ENCODE measurements at regions of chr5 and their contacts with region 1.

Region 1: DNA sequence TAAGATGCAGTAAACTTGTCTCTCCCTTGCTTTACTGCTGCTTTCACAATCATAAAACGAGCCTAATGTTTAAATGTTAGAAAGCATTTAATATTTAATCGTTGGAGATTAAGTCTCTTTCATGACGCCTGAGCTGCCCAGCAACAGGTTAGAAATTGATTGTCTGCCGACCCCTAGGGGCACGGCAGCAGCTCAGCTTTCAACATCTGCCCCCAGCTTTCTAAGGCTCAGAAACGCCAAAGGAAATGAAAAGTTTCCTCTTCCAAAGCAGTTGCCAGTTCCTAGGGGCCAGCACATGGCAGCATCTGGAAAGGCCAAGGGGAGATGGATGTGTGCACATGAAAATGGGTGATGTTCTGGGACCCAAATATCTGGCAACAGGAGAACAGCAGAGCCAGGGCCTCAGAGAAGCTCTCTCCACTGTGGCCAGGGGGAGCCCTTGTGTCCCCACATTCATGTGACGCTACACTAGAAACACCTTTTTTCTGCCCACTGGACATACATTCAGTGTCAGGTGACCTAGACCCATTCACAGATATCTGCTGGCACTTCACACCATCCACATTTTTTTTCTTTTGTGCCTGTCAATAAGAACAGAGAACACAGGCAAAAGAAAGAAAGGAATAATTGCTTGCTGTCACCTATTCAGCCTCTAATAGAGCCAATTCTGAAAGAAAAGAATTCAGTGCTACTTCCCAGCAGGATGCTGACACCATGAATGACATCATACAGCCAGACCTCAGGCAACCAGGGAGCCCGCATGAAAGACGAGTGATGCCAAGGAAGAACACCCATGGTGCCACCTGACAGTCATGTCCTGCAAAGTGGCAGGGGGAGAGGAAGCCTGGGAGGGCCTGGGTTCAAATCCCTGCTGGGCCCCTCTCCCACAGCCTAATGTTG is 205.0 kb upstream of the TAS2R1 start:
- DNase-seq: no peak
- H3K4me3 ChIP-seq: no peak overlapping the region
- H3K4me3 Mint-ChIP-seq: no peak overlapping the region
- H3K27ac Mint-ChIP-seq: no peak overlapping the region
- H3K4me1 ChIP-seq: peaks cover 40% of the 10 kb centered on the region
- H3K4me1 Mint-ChIP-seq: peaks cover 32% of the 10 kb centered on the region
- H3K27me3 ChIP-seq: no peaks in the 10 kb centered on the region
- H3K27me3 Mint-ChIP-seq: no peaks in the 10 kb centered on the region
- CTCF ChIP-seq: no peak

Region 2: DNA sequence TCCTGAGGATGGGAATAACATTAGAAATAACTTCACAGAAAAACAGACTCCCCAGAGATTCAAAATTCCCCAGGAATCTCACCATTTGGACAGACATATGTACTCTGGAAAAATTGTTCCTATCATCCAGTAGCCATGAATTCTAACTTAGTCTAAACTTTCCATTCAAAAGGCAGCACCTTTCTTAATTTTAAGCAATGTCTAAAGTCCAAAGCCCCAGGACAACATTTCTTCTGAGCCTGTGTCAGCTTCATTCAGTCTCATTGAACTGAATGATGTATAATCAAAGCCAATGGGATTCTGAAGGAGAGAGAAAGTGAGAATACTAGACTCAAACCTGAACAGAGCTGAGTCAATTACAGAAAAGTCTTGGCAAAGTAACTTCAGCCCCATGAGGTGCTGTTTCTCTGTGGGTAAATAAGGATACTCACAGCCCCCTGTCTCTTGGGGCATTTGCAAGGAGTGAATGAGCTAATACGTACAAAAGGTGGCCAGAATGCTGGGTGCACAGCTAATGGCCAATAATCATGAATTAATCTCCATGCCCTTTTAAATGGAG is 429.8 kb before region 1 on chr5:
- CTCF ChIA-PET with region 1: no interaction called
- POLR2A ChIA-PET with region 1: no interaction called
- intact Hi-C with region 1: no loop called
- DNase-seq: no peak
- H3K4me3 ChIP-seq: no peak overlapping the region
- H3K4me3 Mint-ChIP-seq: no peak overlapping the region
- H3K27ac Mint-ChIP-seq: no peak overlapping the region
- H3K4me1 ChIP-seq: peaks cover 9% of the 10 kb centered on the region
- H3K4me1 Mint-ChIP-seq: peaks cover 1% of the 10 kb centered on the region
- H3K27me3 ChIP-seq: no peaks in the 10 kb centered on the region
- H3K27me3 Mint-ChIP-seq: no peaks in the 10 kb centered on the region
- CTCF ChIP-seq: no peak

Region 3: GRCh38 chr5:9681706-9682105 is 153.4 kb before region 1 on chr5:
- CTCF ChIA-PET with region 1: no interaction called
- POLR2A ChIA-PET with region 1: no interaction called
- intact Hi-C with region 1: no loop called
- DNase-seq: no peak
- H3K4me3 ChIP-seq: no peak overlapping the region
- H3K4me3 Mint-ChIP-seq: no peak overlapping the region
- H3K27ac Mint-ChIP-seq: no peak overlapping the region
- H3K4me1 ChIP-seq: peaks cover 5% of the 10 kb centered on the region
- H3K4me1 Mint-ChIP-seq: peaks cover 7% of the 10 kb centered on the region
- H3K27me3 ChIP-seq: no peaks in the 10 kb centered on the region
- H3K27me3 Mint-ChIP-seq: no peaks in the 10 kb centered on the region
- CTCF ChIP-seq: no peak

Region 4: DNA sequence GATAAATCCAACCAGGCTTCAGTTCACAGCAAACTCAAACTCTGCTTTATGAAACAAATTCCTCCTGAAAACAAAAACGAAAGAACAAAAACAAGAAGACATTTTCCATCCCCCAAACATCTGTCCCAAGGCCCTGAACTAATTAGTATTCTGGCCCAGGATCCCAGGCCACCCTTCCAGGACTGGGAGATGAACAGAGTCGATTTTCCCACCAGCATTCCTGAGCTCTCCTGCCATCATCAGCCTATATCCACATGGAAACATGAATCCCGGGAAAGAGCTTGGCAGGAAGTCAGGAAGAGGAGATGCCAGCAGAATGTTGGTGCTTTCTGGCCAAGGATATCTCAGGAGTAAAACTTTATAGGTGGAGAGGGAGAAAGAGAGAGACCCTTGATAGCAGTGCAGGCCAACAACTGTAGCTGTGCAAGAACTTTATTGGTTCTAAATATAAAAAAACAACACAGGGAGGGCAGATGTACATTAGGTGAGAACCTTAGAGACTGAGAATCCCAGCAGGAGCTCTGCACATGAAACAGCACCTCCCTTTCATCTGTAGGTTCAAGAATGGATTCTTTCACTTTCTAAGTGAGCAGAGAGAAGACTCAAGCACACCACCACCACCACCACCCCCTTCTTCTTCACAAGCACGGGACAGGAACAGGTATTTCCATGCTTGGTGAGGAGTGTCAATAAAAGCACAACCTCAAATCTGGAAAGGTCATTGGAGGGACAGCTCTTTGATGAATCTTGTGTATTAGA is 14.3 kb before region 1 on chr5:
- CTCF ChIA-PET with region 1: no interaction called
- POLR2A ChIA-PET with region 1: no interaction called
- intact Hi-C with region 1: no loop called
- DNase-seq: no peak
- H3K4me3 ChIP-seq: no peak overlapping the region
- H3K4me3 Mint-ChIP-seq: no peak overlapping the region
- H3K27ac Mint-ChIP-seq: no peak overlapping the region
- H3K4me1 ChIP-seq: no peaks in the 10 kb centered on the region
- H3K4me1 Mint-ChIP-seq: no peaks in the 10 kb centered on the region
- H3K27me3 ChIP-seq: no peaks in the 10 kb centered on the region
- H3K27me3 Mint-ChIP-seq: no peaks in the 10 kb centered on the region
- CTCF ChIP-seq: no peak

Region 5: DNA sequence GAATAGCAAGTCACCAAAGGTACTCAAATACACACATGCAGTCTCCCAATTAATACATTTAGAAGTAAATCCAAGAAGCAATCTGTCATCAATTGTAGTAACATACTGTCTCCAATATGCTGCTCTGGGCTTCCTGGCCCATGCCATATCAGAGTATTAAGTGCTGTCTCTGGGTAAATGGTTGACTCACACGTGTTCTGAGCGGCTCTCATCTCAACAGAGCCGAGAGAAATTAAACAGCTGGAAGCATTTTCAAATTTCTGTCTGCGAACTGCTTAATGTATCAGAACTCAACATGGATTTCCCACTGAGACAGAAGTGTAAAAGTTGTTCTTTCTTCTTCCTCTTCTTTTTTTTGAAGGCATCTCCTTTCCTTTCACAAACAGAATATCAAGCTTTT is 42.4 kb after region 1 on chr5:
- CTCF ChIA-PET with region 1: no interaction called
- POLR2A ChIA-PET with region 1: no interaction called
- intact Hi-C with region 1: loop called (anchors 1 kb)
- DNase-seq: no peak
- H3K4me3 ChIP-seq: no peak overlapping the region
- H3K4me3 Mint-ChIP-seq: no peak overlapping the region
- H3K27ac Mint-ChIP-seq: no peak overlapping the region
- H3K4me1 ChIP-seq: no peaks in the 10 kb centered on the region
- H3K4me1 Mint-ChIP-seq: no peaks in the 10 kb centered on the region
- H3K27me3 ChIP-seq: no peaks in the 10 kb centered on the region
- H3K27me3 Mint-ChIP-seq: no peaks in the 10 kb centered on the region
- CTCF ChIP-seq: no peak

Measured in Caco-2 (cell line).